Calu3 (cell line): ENCODE measurements at regions of chr18 and their contacts with region 1.

Region 1: GRCh38 chr18:34787931-34788532 is 77.9 kb downstream of the DTNA start:
- DNase-seq: peak; percentile 32
- H3K4me3 Mint-ChIP-seq: no peak overlapping the region
- H3K27ac Mint-ChIP-seq: no peak overlapping the region
- H3K4me1 Mint-ChIP-seq: no peaks in the 10 kb centered on the region
- H3K27me3 Mint-ChIP-seq: no peaks in the 10 kb centered on the region
- CTCF ChIP-seq: peak; percentile 49

Region 2: GRCh38 chr18:34122724-34123334 is 665.2 kb before region 1 on chr18:
- CTCF ChIA-PET with region 1: interaction called, 4 read pairs
- intact Hi-C with region 1: loop called (anchors 2 kb)
- DNase-seq: peak; percentile 30
- H3K4me3 Mint-ChIP-seq: no peak overlapping the region
- H3K27ac Mint-ChIP-seq: no peak overlapping the region
- H3K4me1 Mint-ChIP-seq: peaks cover 29% of the 10 kb centered on the region
- H3K27me3 Mint-ChIP-seq: no peaks in the 10 kb centered on the region
- CTCF ChIP-seq: peak; percentile 90

Region 3: GRCh38 chr18:34352385-34353163 is 435.5 kb before region 1 on chr18:
- CTCF ChIA-PET with region 1: interaction called, 6 read pairs
- intact Hi-C with region 1: loop called (anchors 1 kb)
- DNase-seq: no peak
- H3K4me3 Mint-ChIP-seq: no peak overlapping the region
- H3K27ac Mint-ChIP-seq: no peak overlapping the region
- H3K4me1 Mint-ChIP-seq: no peaks in the 10 kb centered on the region
- H3K27me3 Mint-ChIP-seq: no peaks in the 10 kb centered on the region
- CTCF ChIP-seq: peak; percentile 14

Region 4: DNA sequence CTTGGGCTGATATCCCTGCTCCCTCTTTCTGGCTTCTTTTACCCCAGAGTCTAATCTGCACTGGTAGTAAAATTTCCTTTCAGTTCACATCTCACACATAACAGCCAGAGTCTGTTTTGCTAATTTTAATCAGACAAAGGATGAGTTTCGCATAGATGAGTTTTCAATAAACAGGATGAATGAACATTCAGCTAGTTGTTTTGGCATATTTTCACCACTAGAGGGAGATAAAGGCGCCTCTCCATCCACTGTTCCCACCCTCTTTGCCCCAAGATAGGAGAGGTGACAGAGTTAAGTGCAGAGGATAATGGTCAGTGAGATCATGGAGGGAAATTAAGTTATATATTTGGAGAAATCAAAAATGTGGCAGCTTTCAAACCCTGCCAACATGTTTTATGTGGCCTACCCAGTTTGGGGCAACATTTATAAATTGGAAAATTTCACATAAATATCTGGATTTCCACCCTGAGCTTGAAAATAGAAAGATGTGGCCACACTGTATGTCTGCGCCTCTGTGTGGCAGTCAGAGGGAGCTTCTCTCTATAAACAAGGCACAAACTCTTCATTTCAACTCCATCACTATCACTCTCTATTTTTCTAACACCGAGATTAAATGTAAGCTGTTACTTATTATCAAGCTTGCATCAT is 126.4 kb before region 1 on chr18:
- CTCF ChIA-PET with region 1: interaction called, 25 read pairs
- intact Hi-C with region 1: loop called (anchors 1 kb)
- DNase-seq: peak; percentile 33
- H3K4me3 Mint-ChIP-seq: no peak overlapping the region
- H3K27ac Mint-ChIP-seq: peak overlapping the region; percentile 41
- H3K4me1 Mint-ChIP-seq: peaks cover 30% of the 10 kb centered on the region
- H3K27me3 Mint-ChIP-seq: no peaks in the 10 kb centered on the region
- CTCF ChIP-seq: peak; percentile 83

Region 5: DNA sequence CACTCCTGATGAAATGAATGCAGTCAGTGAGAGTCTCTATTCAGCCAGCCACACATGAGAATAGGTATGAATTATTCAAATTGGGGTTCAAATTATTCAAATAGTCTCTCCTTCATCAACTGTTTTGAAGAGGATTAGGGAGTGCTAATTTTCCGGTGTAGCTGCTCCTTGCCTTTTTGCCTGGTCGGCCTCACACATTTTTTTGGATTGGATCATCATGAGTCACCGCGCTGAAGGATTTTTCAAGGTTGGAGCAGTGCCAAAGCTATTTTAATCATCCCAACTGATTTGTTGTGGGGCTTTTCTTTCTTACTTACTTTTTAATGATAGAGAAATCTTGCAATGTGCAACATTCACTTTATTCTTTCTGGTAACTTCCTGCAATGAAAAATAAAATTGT is 80.4 kb before region 1 on chr18:
- CTCF ChIA-PET with region 1: no interaction called
- intact Hi-C with region 1: no loop called
- DNase-seq: peak; percentile 67
- H3K4me3 Mint-ChIP-seq: no peak overlapping the region
- H3K27ac Mint-ChIP-seq: peak overlapping the region; percentile 37
- H3K4me1 Mint-ChIP-seq: peaks cover 23% of the 10 kb centered on the region
- H3K27me3 Mint-ChIP-seq: no peaks in the 10 kb centered on the region
- CTCF ChIP-seq: no peak